Dendritic cell treated with granulocyte-macrophage colony-stimulating factor and Interleukin-4, amounts not matched to agents 40 ng/mL and 50 ng/mL, for 4 days (primary cell): ENCODE measurements at regions of chr5 and their contacts with region 1.

Region 1: DNA sequence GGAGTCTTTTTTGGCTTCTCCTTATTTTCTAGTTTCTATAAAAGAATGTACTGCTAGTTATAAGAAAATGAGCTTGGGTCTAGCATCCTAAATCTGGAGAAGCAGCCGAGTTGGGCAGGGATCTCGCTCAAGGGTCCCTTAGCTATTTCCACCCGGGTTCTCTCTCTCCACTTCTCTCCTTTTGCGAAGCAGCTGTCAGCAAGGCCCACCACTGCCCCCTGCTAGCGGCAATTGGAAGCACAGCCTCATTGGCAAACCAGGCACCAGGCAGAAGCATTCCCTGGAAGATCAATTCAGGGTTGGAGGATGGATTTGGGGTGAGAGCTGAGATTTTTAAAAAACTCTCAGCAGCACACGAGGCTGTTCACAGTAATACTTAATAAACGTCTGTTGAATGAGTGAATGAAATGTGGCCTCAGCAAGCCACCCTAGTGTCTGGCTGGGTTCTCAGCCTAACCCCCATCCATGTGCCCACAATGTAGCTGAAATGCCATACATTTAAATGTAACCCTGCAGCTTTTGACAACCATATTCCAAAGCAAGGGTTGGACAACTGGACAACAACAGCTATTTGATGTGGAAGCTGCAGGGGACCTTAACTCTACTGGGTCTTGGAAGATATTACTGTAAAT is 34.6 kb upstream of the TNIP1 start:
- H3K4me3 Mint-ChIP-seq: no peak overlapping the region
- H3K27ac Mint-ChIP-seq: no peak overlapping the region
- H3K4me1 Mint-ChIP-seq: no peaks in the 10 kb centered on the region
- H3K27me3 Mint-ChIP-seq: no peaks in the 10 kb centered on the region

Region 2: DNA sequence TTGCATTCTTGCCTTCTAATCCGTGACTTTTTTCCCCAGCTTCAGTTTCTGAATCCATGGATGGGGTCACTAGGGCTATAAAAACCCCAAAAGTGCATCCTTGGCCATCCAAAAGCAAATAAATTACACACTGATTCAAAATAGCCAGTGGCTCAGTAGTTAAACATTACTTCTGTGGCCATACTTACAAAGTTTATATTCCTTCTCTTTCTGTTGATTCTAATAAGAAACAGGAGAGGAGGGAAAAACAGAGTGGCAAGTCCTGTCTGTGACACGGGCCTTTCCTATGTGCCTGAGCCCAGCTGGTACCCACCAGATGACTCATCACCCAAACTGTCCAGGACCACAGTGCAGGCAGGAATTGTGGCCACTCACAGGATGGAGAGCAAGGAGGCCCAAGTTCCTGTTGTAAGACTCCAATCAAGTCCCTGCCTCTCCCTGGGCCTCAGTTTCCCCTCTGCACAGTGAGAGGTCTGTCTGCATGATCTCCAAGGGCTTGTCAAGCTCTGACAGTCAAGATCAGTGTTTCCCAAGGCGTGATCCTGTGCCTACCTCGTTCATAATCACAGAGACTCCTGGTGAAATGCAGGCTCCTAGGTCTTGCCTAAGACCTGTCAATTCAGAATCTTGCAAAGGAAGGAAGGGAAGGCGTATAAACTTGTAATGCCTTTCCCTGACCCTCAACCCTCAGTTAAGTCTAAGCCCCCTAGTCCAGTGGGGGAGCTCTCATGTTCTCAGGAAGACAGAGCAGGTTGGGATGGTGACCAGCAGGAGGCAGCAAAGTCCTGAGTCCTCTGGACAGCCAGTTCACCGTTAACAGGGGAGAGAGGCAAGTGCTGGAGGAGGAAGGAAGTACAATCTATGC is 64.1 kb before region 1 on chr5:
- intact Hi-C with region 1: loop called (anchors 1 kb)
- H3K4me3 Mint-ChIP-seq: no peak overlapping the region
- H3K27ac Mint-ChIP-seq: peak overlapping the region; percentile 56
- H3K4me1 Mint-ChIP-seq: peaks cover 50% of the 10 kb centered on the region
- H3K27me3 Mint-ChIP-seq: no peaks in the 10 kb centered on the region

Region 3: GRCh38 chr5:151202381-151203139 is 87.2 kb after region 1 on chr5:
- intact Hi-C with region 1: no loop called
- H3K4me3 Mint-ChIP-seq: no peak overlapping the region
- H3K27ac Mint-ChIP-seq: no peak overlapping the region
- H3K4me1 Mint-ChIP-seq: peaks cover 8% of the 10 kb centered on the region
- H3K27me3 Mint-ChIP-seq: no peaks in the 10 kb centered on the region